Naive thymus-derived CD4-positive, alpha-beta T cell (primary cell): ENCODE measurements at regions of chr19 and their contacts with region 1.

Region 1: DNA sequence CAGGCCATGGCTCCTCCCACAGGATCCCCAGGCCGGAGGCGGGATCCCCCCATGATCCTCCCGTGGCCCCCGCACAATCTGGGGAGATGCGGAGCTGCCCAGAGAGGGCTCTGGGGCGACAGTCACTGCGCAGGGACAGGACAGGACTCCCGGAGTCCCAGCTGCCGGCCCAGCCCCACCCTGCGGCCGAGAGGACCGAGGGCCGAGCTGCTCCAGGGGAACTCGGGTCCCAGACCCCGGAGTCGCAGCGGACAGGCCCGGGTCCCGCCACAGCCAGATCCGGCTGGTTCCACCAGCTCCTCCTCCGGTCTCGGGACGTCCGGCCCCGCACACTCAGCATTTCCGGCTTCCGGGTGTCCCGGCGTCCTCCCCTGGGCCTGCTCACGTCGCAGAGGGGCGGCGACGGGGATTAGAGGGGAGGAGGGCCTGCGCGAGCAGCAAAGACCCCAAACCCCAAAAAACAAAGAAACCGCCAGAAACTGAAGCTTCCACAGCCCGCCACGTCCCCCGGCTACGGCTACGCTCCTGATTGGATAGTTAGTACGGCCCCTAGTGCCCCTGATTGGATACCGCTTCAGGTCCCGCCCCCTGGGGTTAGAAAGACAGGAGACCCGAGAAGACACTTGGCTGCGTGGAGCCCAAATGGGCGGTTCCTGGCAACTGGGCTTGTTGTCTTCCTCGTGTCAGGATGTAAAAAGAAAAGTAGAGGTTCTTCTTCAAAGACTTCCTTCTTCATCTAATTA is 21.3 kb upstream of the OR10H1 start:
- DNase-seq: peak; percentile 81 to 98 (median 97)
- ATAC-seq: peak; percentile 94
- H3K4me3 ChIP-seq: peak overlapping the region; percentile 60
- H3K4me3 Mint-ChIP-seq: peak overlapping the region; percentile 88 to 99 (median 95)
- H3K27ac ChIP-seq: peak overlapping the region; percentile 90
- H3K27ac Mint-ChIP-seq: peak overlapping the region in 7 of 9 donors; percentile 95 to 100 (median 98)
- H3K4me1 ChIP-seq: peaks cover 5 to 7% of the 10 kb centered on the region in 2 donors
- H3K4me1 Mint-ChIP-seq: peaks cover 18 to 28% (median 24%) of the 10 kb centered on the region in 7 donors
- H3K27me3 ChIP-seq: no peaks in the 10 kb centered on the region
- H3K27me3 Mint-ChIP-seq: no peaks in the 10 kb centered on the region

Region 2: GRCh38 chr19:14972676-14973075 is 864.1 kb before region 1 on chr19:
- CTCF ChIA-PET with region 1: no interaction called
- POLR2A ChIA-PET with region 1: no interaction called
- intact Hi-C with region 1: no loop called
- DNase-seq: no peak
- ATAC-seq: no peak
- H3K4me3 ChIP-seq: no peak overlapping the region
- H3K4me3 Mint-ChIP-seq: no peak overlapping the region
- H3K27ac ChIP-seq: no peak overlapping the region
- H3K27ac Mint-ChIP-seq: no peak overlapping the region
- H3K4me1 ChIP-seq: no peaks in the 10 kb centered on the region
- H3K4me1 Mint-ChIP-seq: no peaks in the 10 kb centered on the region
- H3K27me3 ChIP-seq: peaks cover 0 to 4% of the 10 kb centered on the region in 2 donors
- H3K27me3 Mint-ChIP-seq: peaks cover 6 to 63% (median 47%) of the 10 kb centered on the region in 5 donors

Region 3: DNA sequence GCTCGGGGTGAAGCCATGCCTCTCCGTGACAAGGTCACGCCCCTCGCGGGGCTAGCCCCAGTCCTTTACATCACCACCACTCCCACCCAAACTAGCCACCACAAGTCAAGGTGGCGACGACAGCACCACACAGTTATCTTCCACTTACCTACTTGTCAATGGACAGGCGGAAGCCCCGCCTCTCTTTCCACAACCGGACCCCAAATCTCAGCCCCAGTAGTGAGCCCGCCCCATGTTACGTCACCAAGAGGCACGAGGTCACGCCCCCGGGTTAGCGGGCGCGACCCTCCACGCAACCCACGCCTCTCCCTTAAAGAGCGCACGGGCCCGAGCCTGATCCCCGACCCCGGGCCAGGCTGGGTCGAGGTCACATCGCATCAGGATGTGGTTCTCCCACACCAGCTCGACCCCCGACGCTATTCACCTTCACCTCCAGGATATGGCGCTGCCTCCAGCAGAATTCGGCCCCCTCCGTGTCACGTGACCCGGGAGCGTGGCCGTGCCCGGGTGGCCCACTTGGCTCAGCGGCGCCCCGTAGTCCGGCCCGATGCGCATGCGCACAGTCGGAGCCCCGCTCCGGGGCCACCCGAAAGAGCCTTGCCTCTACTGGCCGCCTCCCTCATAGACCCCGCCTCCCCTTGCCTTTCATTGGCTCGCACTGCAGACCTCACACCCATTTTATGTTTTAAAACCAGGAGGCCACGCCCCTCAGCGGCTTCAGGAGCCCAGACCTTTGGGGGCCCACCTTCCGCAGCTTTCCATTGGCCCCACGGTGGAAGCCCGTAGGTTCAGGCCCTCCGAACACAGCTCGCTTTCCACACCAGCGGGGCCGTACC is 711.3 kb before region 1 on chr19:
- CTCF ChIA-PET with region 1: no interaction called
- POLR2A ChIA-PET with region 1: no interaction called
- intact Hi-C with region 1: loop called in 1 of 2 experiments (anchors 1 kb)
- DNase-seq: peak; percentile 94 to 98 (median 96)
- ATAC-seq: peak; percentile 93
- H3K4me3 ChIP-seq: peak overlapping the region; percentile 90
- H3K4me3 Mint-ChIP-seq: peak overlapping the region; percentile 89 to 100 (median 98)
- H3K27ac ChIP-seq: peak overlapping the region; percentile 92
- H3K27ac Mint-ChIP-seq: peak overlapping the region; percentile 91 to 100 (median 97)
- H3K4me1 ChIP-seq: peaks cover 0 to 25% of the 10 kb centered on the region in 2 donors
- H3K4me1 Mint-ChIP-seq: peaks cover 27 to 59% (median 44%) of the 10 kb centered on the region in 7 donors
- H3K27me3 ChIP-seq: no peaks in the 10 kb centered on the region
- H3K27me3 Mint-ChIP-seq: peaks cover 0 to 2% (median 0%) of the 10 kb centered on the region in 5 donors

Region 4: GRCh38 chr19:15466851-15467733 is 369.7 kb before region 1 on chr19:
- CTCF ChIA-PET with region 1: no interaction called
- POLR2A ChIA-PET with region 1: no interaction called
- intact Hi-C with region 1: loop called (anchors 5 to 10 kb)
- DNase-seq: peak in 6 of 9 donors; percentile 17 to 58 (median 32)
- ATAC-seq: peak; percentile 42
- H3K4me3 ChIP-seq: peak overlapping the region; percentile 1
- H3K4me3 Mint-ChIP-seq: peak overlapping the region; percentile 63 to 95 (median 76)
- H3K27ac ChIP-seq: peak overlapping the region; percentile 52
- H3K27ac Mint-ChIP-seq: peak overlapping the region; percentile 85 to 95 (median 87)
- H3K4me1 ChIP-seq: peaks cover 43 to 47% of the 10 kb centered on the region in 2 donors
- H3K4me1 Mint-ChIP-seq: peaks cover 39 to 75% (median 53%) of the 10 kb centered on the region in 7 donors
- H3K27me3 ChIP-seq: no peaks in the 10 kb centered on the region
- H3K27me3 Mint-ChIP-seq: peaks cover 0 to 14% (median 0%) of the 10 kb centered on the region in 5 donors

Region 5: DNA sequence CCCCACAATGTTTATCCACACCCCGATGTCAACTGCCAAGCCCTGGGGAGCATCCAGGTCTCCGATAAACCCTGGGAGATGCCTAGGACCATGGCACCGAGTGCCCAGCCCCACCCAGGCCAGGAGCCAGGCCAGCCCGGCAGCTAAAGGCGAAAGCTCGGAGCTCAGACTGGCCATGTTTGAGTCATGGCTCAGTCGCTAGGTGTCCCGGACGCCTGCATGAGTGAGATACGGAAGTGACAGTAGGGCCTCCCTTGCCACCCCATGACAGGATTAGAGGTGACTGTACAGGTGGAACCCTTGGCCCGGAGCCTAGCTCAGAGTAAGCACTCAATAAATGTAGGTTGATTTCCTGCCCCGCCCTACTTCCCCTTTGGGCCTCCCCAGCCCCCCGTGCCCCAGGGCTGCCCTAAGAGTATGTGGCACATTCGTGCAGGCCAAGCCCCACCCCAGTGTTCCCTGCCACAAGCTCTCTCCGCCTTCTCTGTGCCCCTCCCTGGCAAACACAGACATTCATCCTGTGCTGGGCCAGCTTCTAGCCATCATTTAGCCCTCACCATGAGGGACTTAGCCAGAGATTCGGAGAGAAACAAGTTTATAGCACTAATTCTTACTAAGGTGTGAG is 233.7 kb after region 1 on chr19:
- CTCF ChIA-PET with region 1: no interaction called
- POLR2A ChIA-PET with region 1: interaction called, 7 read pairs
- intact Hi-C with region 1: loop called in 1 of 2 experiments (anchors 1 kb)
- DNase-seq: peak; percentile 53 to 95 (median 90)
- ATAC-seq: peak; percentile 93
- H3K4me3 ChIP-seq: peak overlapping the region; percentile 56
- H3K4me3 Mint-ChIP-seq: peak overlapping the region in 4 of 10 donors; percentile 65 to 81 (median 68)
- H3K27ac ChIP-seq: peak overlapping the region; percentile 89
- H3K27ac Mint-ChIP-seq: no peak overlapping the region
- H3K4me1 ChIP-seq: peaks cover 22 to 61% of the 10 kb centered on the region in 2 donors
- H3K4me1 Mint-ChIP-seq: peaks cover 31 to 50% (median 42%) of the 10 kb centered on the region in 7 donors
- H3K27me3 ChIP-seq: no peaks in the 10 kb centered on the region
- H3K27me3 Mint-ChIP-seq: no peaks in the 10 kb centered on the region

Region 6: GRCh38 chr19:16324384-16325160 is 487.8 kb after region 1 on chr19 and contains the start of gene KLF2:
- CTCF ChIA-PET with region 1: no interaction called
- POLR2A ChIA-PET with region 1: interaction called, 8 read pairs
- intact Hi-C with region 1: loop called in 1 of 2 experiments (anchors 1 kb)
- DNase-seq: peak; percentile 88 to 96 (median 95)
- ATAC-seq: peak; percentile 81
- H3K4me3 ChIP-seq: peak within 1 kb of the TSS; percentile 86
- H3K4me3 Mint-ChIP-seq: peak within 1 kb of the TSS; percentile 51 to 98 (median 85)
- H3K27ac ChIP-seq: peak within 1 kb of the TSS; percentile 98
- H3K27ac Mint-ChIP-seq: peak within 1 kb of the TSS; percentile 85 to 100 (median 96)
- H3K4me1 ChIP-seq: peaks cover 23 to 30% of the 10 kb centered on the region in 2 donors
- H3K4me1 Mint-ChIP-seq: peaks cover 27 to 54% (median 48%) of the 10 kb centered on the region in 7 donors
- H3K27me3 ChIP-seq: no peaks in the 10 kb centered on the region
- H3K27me3 Mint-ChIP-seq: peaks cover 0 to 70% (median 0%) of the 10 kb centered on the region in 5 donors
- total RNA-seq, gene KLF2: 195 to 630 (median 466) TPM